Heart left ventricle (tissue), 16 donors: ENCODE measurements at regions of chr6 and their contacts with region 1.

Region 1: DNA sequence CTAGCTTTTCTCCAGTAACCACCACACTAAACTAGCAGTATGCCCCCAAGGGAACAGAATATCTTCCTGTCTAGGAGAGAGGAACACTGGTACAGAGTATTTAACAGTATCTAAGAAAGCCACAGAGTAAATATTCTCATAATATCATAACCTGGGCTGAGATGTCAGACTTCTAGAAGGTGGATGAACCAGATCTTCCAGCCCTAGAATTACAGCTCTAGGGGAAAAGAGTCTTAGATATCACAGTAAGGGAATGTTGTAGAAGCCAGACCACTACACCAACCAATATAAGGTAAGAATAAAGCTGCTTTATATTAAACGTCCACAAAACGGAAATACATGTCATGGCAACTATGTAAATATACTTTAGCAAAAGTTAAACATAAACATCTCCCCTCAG is 12.4 kb downstream of the SERINC1 start:
- DNase-seq: no peak
- ATAC-seq: no peak
- H3K4me3 ChIP-seq: no peak overlapping the region
- H3K27ac ChIP-seq: no peak overlapping the region
- H3K4me1 ChIP-seq: peaks cover 0 to 80% (median 65%) of the 10 kb centered on the region in 12 donors
- H3K27me3 ChIP-seq: no peaks in the 10 kb centered on the region
- CTCF ChIP-seq: no peak
- POLR2A ChIP-seq: no peak

Region 2: DNA sequence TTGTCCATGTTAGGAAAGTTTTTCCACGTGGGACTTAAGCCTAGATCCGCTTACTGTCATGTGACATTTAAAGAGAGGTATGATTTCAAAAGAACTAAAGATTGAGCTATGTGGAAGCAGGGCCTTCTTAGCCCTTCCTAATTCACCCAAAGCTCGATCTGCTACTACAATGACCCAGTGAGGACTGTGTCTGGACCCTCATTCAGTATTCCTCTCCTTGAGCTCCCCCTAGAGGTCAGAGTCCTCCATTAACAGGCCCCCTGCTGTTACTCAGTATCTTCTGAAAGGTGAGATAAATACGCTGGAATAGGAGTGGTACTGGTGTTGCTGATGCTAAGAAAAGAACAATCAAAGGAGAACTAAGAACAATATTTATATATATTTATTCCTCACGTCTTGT is 609.7 kb before region 1 on chr6:
- intact Hi-C with region 1: no loop called
- DNase-seq: peak in 4 of 5 donors; percentile 27 to 66 (median 60)
- ATAC-seq: peak; percentile 79 to 94 (median 91)
- H3K4me3 ChIP-seq: no peak overlapping the region
- H3K27ac ChIP-seq: peak overlapping the region in 4 of 12 donors; percentile 18 to 24 (median 18)
- H3K4me1 ChIP-seq: peaks cover 0 to 26% (median 7%) of the 10 kb centered on the region in 12 donors
- H3K27me3 ChIP-seq: no peaks in the 10 kb centered on the region
- CTCF ChIP-seq: peak; percentile 58 to 86 (median 80)
- POLR2A ChIP-seq: no peak

Region 3: GRCh38 chr6:122422614-122423267 is 36.5 kb before region 1 on chr6:
- intact Hi-C with region 1: loop called in 1 of 10 experiments (anchors 5 kb)
- DNase-seq: no peak
- ATAC-seq: no peak
- H3K4me3 ChIP-seq: no peak overlapping the region
- H3K27ac ChIP-seq: no peak overlapping the region
- H3K4me1 ChIP-seq: peaks cover 0 to 2% (median 0%) of the 10 kb centered on the region in 12 donors
- H3K27me3 ChIP-seq: no peaks in the 10 kb centered on the region
- CTCF ChIP-seq: no peak
- POLR2A ChIP-seq: no peak

Region 4: DNA sequence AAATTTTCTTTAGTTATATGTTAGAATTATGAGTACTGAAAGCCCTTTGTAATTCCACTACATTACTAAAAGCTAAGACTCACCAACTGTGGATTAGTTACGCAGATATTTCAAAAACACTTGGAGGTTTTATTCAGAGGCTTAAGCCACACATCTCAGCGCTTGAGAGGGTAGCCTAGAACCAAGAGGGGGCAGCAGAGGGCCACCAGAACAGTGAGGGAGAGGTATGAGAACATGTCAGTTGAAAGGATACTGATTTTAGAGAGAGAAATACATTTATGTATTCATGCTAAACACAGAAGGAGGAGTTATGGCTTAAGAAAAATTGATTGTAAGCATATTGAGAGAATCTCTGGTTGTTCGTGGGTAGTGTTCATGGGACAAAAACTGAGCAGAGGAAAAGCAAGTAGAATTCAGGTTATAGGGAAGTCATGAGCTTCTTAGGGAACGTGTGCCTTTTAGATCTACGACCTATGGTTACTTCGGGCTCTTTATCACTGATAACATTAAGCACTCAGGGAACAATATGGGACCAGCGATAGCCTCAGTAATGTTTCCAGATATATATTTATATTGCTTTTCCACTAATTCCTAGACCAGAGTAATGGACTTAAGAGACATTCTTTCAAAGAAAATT is 32.8 kb after region 1 on chr6:
- intact Hi-C with region 1: no loop called
- DNase-seq: peak; percentile 49 to 64 (median 58)
- ATAC-seq: peak in 3 of 4 donors; percentile 89 to 96 (median 94)
- H3K4me3 ChIP-seq: peak overlapping the region in 1 of 12 donors; percentile 25
- H3K27ac ChIP-seq: no peak overlapping the region
- H3K4me1 ChIP-seq: peaks cover 0 to 3% (median 0%) of the 10 kb centered on the region in 12 donors
- H3K27me3 ChIP-seq: peaks cover 0 to 3% (median 0%) of the 10 kb centered on the region in 9 donors
- CTCF ChIP-seq: peak; percentile 71 to 95 (median 86)
- POLR2A ChIP-seq: no peak